ENCODE measurements at regions of chr7 and their contacts with region 1.

Region 1: GRCh38 chr7:110786328-110786965 is 304.5 kb upstream of the LRRN3 start:
- DNase-seq: no peak
- H3K4me3 Mint-ChIP-seq: no peak overlapping the region
- H3K27ac Mint-ChIP-seq: no peak overlapping the region
- H3K4me1 Mint-ChIP-seq: no peaks in the 10 kb centered on the region
- H3K27me3 Mint-ChIP-seq: no peaks in the 10 kb centered on the region
- CTCF ChIP-seq: no peak

Region 2: DNA sequence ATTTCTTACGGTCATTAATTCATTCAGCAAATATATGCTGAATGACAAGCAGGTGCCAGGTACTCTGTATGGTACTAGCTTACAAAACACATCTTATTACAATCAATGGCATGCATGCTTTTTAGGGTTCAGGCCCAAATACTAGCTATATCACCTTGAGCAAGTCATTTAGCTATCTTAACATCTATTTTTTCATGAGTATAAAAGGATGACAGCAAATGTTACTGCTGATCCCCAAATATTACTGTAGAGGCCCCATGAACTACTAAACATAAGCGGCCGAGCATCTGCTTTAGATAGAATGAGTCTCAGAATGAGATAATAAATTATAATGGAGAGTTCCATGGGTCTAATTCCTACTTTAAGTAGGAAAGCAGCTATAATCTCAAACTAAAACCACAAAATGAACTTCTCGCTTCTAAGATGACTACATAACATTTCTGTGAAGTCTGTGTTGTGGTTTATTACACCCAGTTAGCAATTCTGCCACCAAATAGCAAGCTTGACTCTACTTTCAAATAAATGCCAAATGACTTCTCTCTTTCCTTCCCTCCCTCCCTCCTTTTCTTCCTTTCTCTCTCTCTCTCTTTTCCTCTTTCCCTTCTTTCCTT is 190.8 kb after region 1 on chr7:
- CTCF ChIA-PET with region 1: interaction called, 10 read pairs
- intact Hi-C with region 1: no loop called
- DNase-seq: no peak
- H3K4me3 Mint-ChIP-seq: no peak overlapping the region
- H3K27ac Mint-ChIP-seq: no peak overlapping the region
- H3K4me1 Mint-ChIP-seq: peaks cover 10% of the 10 kb centered on the region
- H3K27me3 Mint-ChIP-seq: no peaks in the 10 kb centered on the region
- CTCF ChIP-seq: no peak

Region 3: GRCh38 chr7:111292026-111292470 is 505.6 kb after region 1 on chr7:
- CTCF ChIA-PET with region 1: no interaction called
- intact Hi-C with region 1: no loop called
- DNase-seq: no peak
- H3K4me3 Mint-ChIP-seq: no peak overlapping the region
- H3K27ac Mint-ChIP-seq: no peak overlapping the region
- H3K4me1 Mint-ChIP-seq: no peaks in the 10 kb centered on the region
- H3K27me3 Mint-ChIP-seq: no peaks in the 10 kb centered on the region
- CTCF ChIP-seq: no peak